Endothelial cell of umbilical vein (primary cell): ENCODE measurements at regions of chr1 and their contacts with region 1.

Region 1: GRCh38 chr1:117067533-117068370 is 7.6 kb downstream of the TTF2 start:
- DNase-seq: peak; percentile 51
- H3K4me3 ChIP-seq: no peak overlapping the region
- H3K27ac ChIP-seq: no peak overlapping the region
- H3K4me1 ChIP-seq: no peaks in the 10 kb centered on the region
- H3K27me3 ChIP-seq: no peaks in the 10 kb centered on the region
- CTCF ChIP-seq: peak; percentile 64 to 77
- POLR2A ChIP-seq: no peak

Region 2: GRCh38 chr1:116919802-116920201 is 147.9 kb before region 1 on chr1:
- CTCF ChIA-PET with region 1: no interaction called
- POLR2A ChIA-PET with region 1: no interaction called
- dilution Hi-C with region 1: no loop called
- intact Hi-C with region 1: no loop called
- DNase-seq: no peak
- H3K4me3 ChIP-seq: no peak overlapping the region
- H3K27ac ChIP-seq: no peak overlapping the region
- H3K4me1 ChIP-seq: peaks cover 15% of the 10 kb centered on the region
- H3K27me3 ChIP-seq: no peaks in the 10 kb centered on the region
- CTCF ChIP-seq: no peak
- POLR2A ChIP-seq: no peak

Region 3: GRCh38 chr1:117009132-117009531 is 58.6 kb before region 1 on chr1:
- CTCF ChIA-PET with region 1: no interaction called
- POLR2A ChIA-PET with region 1: no interaction called
- dilution Hi-C with region 1: no loop called
- intact Hi-C with region 1: no loop called
- DNase-seq: no peak
- H3K4me3 ChIP-seq: no peak overlapping the region
- H3K27ac ChIP-seq: no peak overlapping the region
- H3K4me1 ChIP-seq: no peaks in the 10 kb centered on the region
- H3K27me3 ChIP-seq: peaks cover 0 to 6% of the 10 kb centered on the region in 2 experiments
- CTCF ChIP-seq: no peak
- POLR2A ChIP-seq: no peak

Region 4: DNA sequence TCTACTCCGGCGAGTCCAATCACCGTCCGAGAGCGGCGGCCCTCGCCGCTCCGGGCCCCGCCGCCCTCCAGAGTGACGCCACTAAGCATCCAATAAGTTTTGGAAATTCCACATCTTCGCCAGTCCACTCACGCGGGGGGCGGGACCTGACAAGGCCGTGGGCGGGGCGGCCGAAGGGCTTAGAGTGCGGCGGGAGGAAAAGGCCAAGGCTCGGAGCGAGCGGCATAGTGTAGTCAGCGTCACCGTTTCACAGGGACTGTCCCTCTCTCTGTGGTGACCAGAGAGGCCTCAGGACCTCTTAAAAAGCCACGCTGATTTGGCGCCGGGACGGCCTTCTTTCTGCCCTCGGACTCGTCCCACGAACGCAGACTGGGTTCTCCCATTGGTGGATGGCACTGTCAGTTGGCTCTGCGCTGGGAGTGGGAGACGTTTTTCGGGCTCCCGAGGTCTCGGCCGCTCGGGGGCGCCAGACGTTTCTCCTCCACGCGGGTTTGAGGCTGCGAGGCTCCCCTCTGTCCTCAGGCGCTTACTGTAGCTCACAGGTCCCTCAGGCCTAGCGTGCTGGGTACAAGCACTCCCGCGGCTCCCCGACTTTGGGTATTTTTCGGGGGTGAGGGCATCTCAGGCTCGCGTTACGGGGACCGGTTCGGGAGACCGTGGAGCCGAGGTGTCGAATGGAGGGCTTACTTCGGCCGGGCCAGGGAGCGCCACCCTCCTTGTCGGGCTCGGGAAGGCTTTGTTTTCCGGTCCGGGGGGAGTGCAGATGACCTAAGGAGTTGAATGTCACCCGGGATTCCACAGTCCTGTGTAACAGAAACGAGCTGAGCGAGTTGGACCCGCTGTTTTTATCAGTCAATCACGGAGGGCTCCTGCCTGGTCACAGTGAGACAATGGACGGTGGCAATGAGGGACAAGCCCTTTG is 54.3 kb after region 1 on chr1:
- CTCF ChIA-PET with region 1: interaction called, 490 read pairs
- POLR2A ChIA-PET with region 1: no interaction called
- dilution Hi-C with region 1: no loop called
- intact Hi-C with region 1: loop called (anchors 2 kb)
- DNase-seq: peak; percentile 98
- H3K4me3 ChIP-seq: peak overlapping the region; percentile 48 to 86 (median 74)
- H3K27ac ChIP-seq: peak overlapping the region; percentile 90
- H3K4me1 ChIP-seq: peaks cover 10% of the 10 kb centered on the region
- H3K27me3 ChIP-seq: peaks cover 11 to 25% of the 10 kb centered on the region in 2 experiments
- CTCF ChIP-seq: peak; percentile 88 to 91
- POLR2A ChIP-seq: no peak

Region 5: GRCh38 chr1:117284399-117285215 is 216.9 kb after region 1 on chr1:
- CTCF ChIA-PET with region 1: interaction called, 68 read pairs
- POLR2A ChIA-PET with region 1: no interaction called
- dilution Hi-C with region 1: no loop called
- intact Hi-C with region 1: no loop called
- DNase-seq: peak; percentile 39
- H3K4me3 ChIP-seq: no peak overlapping the region
- H3K27ac ChIP-seq: no peak overlapping the region
- H3K4me1 ChIP-seq: no peaks in the 10 kb centered on the region
- H3K27me3 ChIP-seq: peaks cover 0 to 1% of the 10 kb centered on the region in 2 experiments
- CTCF ChIP-seq: peak in 1 of 2 donors; percentile 17
- POLR2A ChIP-seq: no peak